Ovary (tissue), 10 donors: ENCODE measurements at regions of chr17 and their contacts with region 1.

Region 1: DNA sequence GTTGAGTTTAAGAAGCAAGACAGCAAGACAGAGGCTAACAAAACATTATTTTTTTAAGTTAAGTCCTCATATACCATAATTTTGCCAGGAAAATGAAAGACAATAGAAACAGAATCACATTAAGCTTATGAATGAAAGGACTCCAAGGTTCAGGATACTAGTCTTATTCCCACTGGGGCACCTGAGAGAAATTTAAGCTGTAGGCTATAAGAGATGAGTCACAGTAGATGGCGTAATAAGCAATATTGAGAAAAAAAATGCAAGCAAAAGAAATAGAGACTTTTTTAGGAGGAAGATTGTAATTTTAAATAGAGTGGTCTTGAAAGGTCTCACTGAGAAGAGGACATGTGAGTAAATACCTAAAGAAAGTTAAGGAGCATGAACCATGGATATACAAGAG is 57.1 kb upstream of the KIF2B start:
- DNase-seq: no peak
- H3K4me3 ChIP-seq: no peak overlapping the region
- H3K27ac ChIP-seq: no peak overlapping the region
- H3K4me1 ChIP-seq: no peaks in the 10 kb centered on the region
- H3K27me3 ChIP-seq: no peaks in the 10 kb centered on the region
- CTCF ChIP-seq: no peak
- EP300 ChIP-seq: no peak
- POLR2A ChIP-seq: no peak

Region 2: DNA sequence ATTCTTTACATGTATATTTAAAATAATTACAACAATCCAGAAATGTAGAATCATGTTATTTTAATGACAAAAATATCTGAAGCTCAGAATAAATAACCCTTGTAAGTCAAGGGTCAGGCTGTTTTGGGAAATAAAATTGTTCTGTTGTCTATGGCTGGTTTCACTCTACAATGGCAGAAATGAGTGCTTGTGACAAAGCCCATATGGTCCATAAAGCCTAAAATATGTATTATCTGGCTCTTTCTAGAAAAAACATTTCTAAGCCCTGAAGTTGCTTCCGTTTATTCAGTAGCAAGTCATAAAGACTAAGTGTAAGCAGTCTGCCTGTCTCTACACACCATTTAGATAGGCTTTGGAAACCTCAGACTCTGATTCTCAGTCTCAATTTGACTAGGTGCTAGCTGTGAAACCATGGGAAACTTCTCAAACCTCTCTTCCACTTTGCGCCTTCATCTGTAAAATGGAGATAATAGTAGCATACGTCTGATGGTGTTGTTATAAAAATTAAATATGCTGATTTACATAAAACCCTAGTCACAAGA is 1241.4 kb before region 1 on chr17:
- intact Hi-C with region 1: loop called in 1 of 4 experiments (anchors 5 kb)
- DNase-seq: no peak
- H3K4me3 ChIP-seq: no peak overlapping the region
- H3K27ac ChIP-seq: no peak overlapping the region
- H3K4me1 ChIP-seq: no peaks in the 10 kb centered on the region
- H3K27me3 ChIP-seq: peaks cover 4% of the 10 kb centered on the region
- CTCF ChIP-seq: no peak
- EP300 ChIP-seq: no peak
- POLR2A ChIP-seq: no peak

Region 3: DNA sequence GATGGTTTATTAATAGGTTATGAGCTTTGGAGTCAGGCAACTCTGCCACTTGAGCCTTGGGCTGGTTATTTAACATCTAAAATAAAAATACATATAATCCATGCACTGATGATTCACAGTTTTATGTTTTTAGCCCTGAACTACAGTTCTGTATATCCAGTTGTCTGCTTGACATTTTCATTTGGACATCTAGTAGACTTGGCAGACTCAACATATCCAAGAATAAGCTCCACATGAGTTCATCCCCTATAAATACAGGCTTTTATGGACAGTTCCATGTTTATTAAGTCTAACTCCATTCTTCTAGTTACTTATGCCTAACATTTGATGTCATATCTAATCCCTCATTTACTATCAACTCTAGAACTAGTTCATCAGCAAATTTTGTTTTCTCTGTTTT is 231.3 kb after region 1 on chr17:
- intact Hi-C with region 1: no loop called
- DNase-seq: no peak
- H3K4me3 ChIP-seq: no peak overlapping the region
- H3K27ac ChIP-seq: no peak overlapping the region
- H3K4me1 ChIP-seq: no peaks in the 10 kb centered on the region
- H3K27me3 ChIP-seq: no peaks in the 10 kb centered on the region
- CTCF ChIP-seq: no peak
- EP300 ChIP-seq: no peak
- POLR2A ChIP-seq: no peak